ENCODE measurements at regions of chr20 and their contacts with region 1.

Region 1: DNA sequence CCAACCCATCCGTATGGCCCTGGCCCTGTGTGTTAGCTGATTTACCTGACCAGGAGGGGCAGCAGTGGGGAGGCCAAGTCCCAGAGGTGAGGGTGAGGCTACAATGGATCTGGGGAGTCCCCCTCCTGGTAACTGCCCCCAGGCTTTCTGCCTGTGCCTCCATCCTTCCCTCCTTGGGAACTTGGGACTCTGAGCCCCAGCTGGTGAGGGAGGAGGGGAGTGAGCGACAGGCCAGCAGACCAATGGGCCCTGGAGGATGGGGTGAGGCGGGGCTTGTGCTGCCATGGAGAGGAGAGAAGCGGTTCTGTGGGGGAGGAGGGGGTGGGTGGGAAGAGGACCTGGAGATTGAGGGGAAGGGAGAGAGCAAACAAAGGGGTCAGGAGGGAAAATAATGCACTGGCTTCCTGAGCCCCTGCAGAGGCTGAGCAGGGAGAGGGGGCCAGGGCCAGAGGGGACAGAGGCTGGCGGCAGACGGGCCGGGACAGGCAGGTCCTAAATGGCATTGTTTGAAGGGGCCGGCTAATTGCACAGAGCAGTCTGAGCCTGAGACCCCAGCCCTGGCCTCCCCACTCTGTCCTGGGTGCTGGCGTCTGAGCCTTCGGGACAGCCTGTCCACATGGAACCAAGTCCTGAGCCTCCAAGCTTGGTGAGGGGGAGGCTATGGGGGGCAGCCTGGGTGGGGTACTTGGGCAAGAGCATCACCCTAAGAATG is 17.5 kb downstream of the DNMT3B start:
- DNase-seq: no peak
- ATAC-seq: no peak
- H3K4me3 ChIP-seq: no peak overlapping the region
- H3K27ac ChIP-seq: no peak overlapping the region
- H3K4me1 ChIP-seq: peaks cover 6% of the 10 kb centered on the region
- H3K27me3 ChIP-seq: no peaks in the 10 kb centered on the region
- CTCF ChIP-seq: no peak

Region 2: GRCh38 chr20:32674362-32674789 is 105.3 kb before region 1 on chr20:
- CTCF ChIA-PET with region 1: interaction called, 37 read pairs
- POLR2A ChIA-PET with region 1: no interaction called
- in situ Hi-C with region 1: no loop called
- intact Hi-C with region 1: loop called (anchors 1 kb)
- DNase-seq: peak; percentile 50
- ATAC-seq: peak; percentile 88
- H3K4me3 ChIP-seq: no peak overlapping the region
- H3K27ac ChIP-seq: no peak overlapping the region
- H3K4me1 ChIP-seq: no peaks in the 10 kb centered on the region
- H3K27me3 ChIP-seq: no peaks in the 10 kb centered on the region
- CTCF ChIP-seq: peak; percentile 95

Region 3: DNA sequence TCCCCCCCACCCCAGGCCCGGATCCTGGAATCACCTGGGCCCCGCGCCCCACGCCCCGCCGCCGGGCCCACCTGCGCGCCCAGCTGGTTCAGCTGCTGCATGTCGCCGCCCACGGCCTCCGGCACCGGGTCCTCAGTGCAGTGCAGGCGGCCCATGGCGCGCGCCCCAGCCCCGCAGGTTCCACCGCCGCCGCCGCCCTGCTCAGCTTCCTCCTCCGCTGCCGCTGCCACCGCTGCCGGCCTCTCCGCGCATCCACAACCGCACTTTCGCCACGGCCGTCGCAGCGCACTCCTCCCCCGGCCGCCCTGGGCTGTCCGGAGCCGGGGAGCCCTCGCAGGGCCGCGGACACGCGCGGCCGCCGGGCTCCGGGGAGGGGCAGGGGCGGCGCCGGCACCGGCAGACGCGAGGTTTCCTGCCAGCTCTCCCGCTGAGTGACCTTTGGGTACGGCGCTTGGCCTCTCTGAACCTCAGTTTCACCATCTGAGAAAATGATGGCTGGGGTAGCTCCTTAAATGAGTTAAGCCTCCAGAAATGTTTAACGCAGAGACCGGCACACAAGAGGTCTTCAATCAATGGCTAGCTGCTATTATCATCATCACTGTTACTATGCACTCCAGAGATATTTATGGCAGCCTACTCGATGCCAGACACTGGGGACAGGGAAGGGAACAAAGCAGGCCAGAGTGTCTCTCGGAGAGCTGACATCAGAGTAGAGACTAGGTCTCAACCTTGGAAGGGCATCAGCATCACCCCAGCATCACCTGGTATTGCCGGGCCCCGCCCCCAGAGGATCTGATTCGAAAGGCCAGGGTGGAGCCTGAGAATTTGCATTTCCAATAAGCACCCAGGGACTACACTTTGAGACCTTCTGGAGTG is 36.2 kb before region 1 on chr20 and contains the start of gene COMMD7:
- CTCF ChIA-PET with region 1: interaction called, 11 read pairs
- POLR2A ChIA-PET with region 1: no interaction called
- in situ Hi-C with region 1: no loop called
- intact Hi-C with region 1: no loop called
- DNase-seq: no peak
- ATAC-seq: peak; percentile 78
- H3K4me3 ChIP-seq: peak within 1 kb of the TSS; percentile 57 to 63
- H3K27ac ChIP-seq: peak within 1 kb of the TSS; percentile 74
- H3K4me1 ChIP-seq: peaks cover 7% of the 10 kb centered on the region; the same call in 1 of the 2 replicates
- H3K27me3 ChIP-seq: no peaks in the 10 kb centered on the region
- CTCF ChIP-seq: no peak
- total RNA-seq, gene COMMD7: 24.8 TPM

Region 4: GRCh38 chr20:32762754-32763201 is 16.9 kb before region 1 on chr20:
- CTCF ChIA-PET with region 1: interaction called, 12 read pairs
- POLR2A ChIA-PET with region 1: no interaction called
- in situ Hi-C with region 1: no loop called
- intact Hi-C with region 1: no loop called
- DNase-seq: no peak
- ATAC-seq: peak; percentile 21; the same call in 1 of the 2 replicates
- H3K4me3 ChIP-seq: peak overlapping the region; percentile 71 to 83
- H3K27ac ChIP-seq: peak overlapping the region; percentile 53
- H3K4me1 ChIP-seq: peaks cover 6% of the 10 kb centered on the region; the same call in 1 of the 2 replicates
- H3K27me3 ChIP-seq: no peaks in the 10 kb centered on the region
- CTCF ChIP-seq: no peak

Measured in Panc1 (cell line).